OCI-LY7 (cell line): ENCODE measurements at regions of chr10 and their contacts with region 1.

Region 1: DNA sequence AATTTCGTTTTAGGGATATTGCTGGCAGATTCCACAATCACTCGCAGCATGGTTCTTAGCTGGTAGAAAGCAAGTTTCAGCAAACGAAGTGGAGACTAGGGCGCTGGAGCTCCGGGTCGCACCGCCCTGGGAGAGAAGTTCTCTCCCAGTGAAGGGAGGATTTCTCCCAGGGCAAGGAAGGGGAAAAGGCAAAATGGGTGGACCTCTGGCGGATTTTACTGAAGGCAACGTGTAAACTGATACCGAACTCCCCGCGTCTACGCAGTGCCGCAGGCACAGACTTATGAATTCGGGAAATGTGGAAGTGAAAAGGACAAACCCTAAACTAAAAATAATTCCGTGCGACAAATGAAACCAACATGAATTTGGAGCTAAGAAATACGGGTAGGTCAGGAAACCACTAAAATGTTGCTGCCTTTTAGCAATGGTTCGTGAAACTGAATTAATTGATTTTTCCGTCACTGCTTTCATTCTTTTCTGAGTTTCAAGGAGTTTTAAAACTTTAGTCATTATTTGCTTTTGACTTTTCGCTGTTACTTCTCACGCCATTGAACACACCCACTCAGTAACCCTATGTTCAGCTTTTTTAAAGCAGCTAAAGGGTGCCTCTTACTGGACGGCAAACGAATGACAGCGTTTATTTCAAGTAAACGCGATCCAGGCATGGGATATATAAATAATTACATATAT is at the start of gene MYOF:
- DNase-seq: peak; percentile 72
- H3K4me3 ChIP-seq: peak within 1 kb of the TSS; percentile 63
- H3K27ac ChIP-seq: no peak within 1 kb of the TSS
- H3K4me1 ChIP-seq: peaks cover 6% of the 10 kb centered on the region
- CTCF ChIP-seq: peak; percentile 77
- total RNA-seq, gene MYOF: not detected in 2 replicates

Region 2: GRCh38 chr10:93376372-93377293 is 105.7 kb before region 1 on chr10:
- CTCF ChIA-PET with region 1: interaction called, 15 read pairs
- POLR2A ChIA-PET with region 1: interaction called, 14 read pairs
- intact Hi-C with region 1: loop called (anchors 1 kb)
- DNase-seq: peak; percentile 69
- H3K4me3 ChIP-seq: no peak overlapping the region
- H3K27ac ChIP-seq: no peak overlapping the region
- H3K4me1 ChIP-seq: no peaks in the 10 kb centered on the region
- CTCF ChIP-seq: peak; percentile 95

Region 3: GRCh38 chr10:93406364-93407145 is 75.7 kb before region 1 on chr10:
- CTCF ChIA-PET with region 1: no interaction called
- POLR2A ChIA-PET with region 1: no interaction called
- intact Hi-C with region 1: no loop called
- DNase-seq: no peak
- H3K4me3 ChIP-seq: no peak overlapping the region
- H3K27ac ChIP-seq: no peak overlapping the region
- H3K4me1 ChIP-seq: no peaks in the 10 kb centered on the region
- CTCF ChIP-seq: no peak

Region 4: DNA sequence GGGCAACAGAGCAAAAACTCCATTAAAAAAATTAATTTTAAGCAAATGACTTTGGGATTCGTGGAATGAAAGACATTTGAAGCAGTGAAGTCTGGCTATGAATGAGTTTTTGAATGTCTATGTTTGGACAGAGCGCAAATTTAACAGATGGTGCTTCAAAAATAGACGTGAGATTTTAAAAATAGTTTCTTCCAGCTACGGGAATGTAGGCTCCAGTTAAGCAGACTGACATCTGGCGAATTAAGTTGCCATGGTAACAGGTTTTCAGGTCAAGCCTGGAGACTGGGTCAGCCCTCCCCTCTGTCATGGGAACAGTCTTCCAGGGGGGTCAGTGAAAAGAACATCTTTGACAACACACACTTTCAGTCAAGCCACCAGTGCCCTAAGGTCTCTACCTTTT is 62.2 kb before region 1 on chr10:
- CTCF ChIA-PET with region 1: no interaction called
- POLR2A ChIA-PET with region 1: no interaction called
- intact Hi-C with region 1: loop called (anchors 5 kb)
- DNase-seq: no peak
- H3K4me3 ChIP-seq: no peak overlapping the region
- H3K27ac ChIP-seq: no peak overlapping the region
- H3K4me1 ChIP-seq: no peaks in the 10 kb centered on the region
- CTCF ChIP-seq: no peak

Region 5: GRCh38 chr10:93515071-93516005 is 33.0 kb after region 1 on chr10:
- CTCF ChIA-PET with region 1: no interaction called
- POLR2A ChIA-PET with region 1: interaction called, 3 read pairs
- intact Hi-C with region 1: loop called (anchors 1 kb)
- DNase-seq: no peak
- H3K4me3 ChIP-seq: no peak overlapping the region
- H3K27ac ChIP-seq: no peak overlapping the region
- H3K4me1 ChIP-seq: no peaks in the 10 kb centered on the region
- CTCF ChIP-seq: no peak

Region 6: GRCh38 chr10:93630625-93631557 is 148.6 kb after region 1 on chr10:
- CTCF ChIA-PET with region 1: no interaction called
- POLR2A ChIA-PET with region 1: no interaction called
- intact Hi-C with region 1: no loop called
- DNase-seq: no peak
- H3K4me3 ChIP-seq: no peak overlapping the region
- H3K27ac ChIP-seq: no peak overlapping the region
- H3K4me1 ChIP-seq: peaks cover 33% of the 10 kb centered on the region
- CTCF ChIP-seq: no peak